PC-9 (cell line): ENCODE measurements at regions of chr5 and their contacts with region 1.

Region 1: GRCh38 chr5:41716382-41716781 is 153.8 kb downstream of the OXCT1 start:
- DNase-seq: no peak
- H3K4me3 ChIP-seq: no peak overlapping the region
- H3K27ac ChIP-seq: no peak overlapping the region
- H3K4me1 ChIP-seq: no peaks in the 10 kb centered on the region
- H3K27me3 ChIP-seq: no peaks in the 10 kb centered on the region
- CTCF ChIP-seq: no peak

Region 2: DNA sequence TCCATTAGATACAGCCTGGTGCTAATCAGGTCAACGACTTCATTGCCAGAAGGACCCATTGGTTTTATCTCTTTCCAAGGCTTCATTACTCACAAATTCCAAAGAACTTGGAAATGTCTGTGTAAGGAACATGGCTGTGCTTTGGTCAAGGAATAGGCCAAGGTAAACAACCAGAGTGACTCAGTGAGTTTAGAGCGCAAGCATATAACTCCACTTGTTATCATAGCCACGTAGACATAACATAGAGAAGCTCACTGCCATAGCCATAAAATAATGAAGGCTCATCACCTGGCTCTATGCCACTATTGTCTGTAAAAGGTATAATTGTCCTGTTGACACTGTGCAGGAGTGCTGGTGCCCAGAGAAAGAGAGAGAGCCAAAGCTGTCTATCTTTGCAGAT is 66.7 kb before region 1 on chr5:
- CTCF ChIA-PET with region 1: no interaction called
- POLR2A ChIA-PET with region 1: no interaction called
- intact Hi-C with region 1: loop called (anchors 10 kb)
- DNase-seq: no peak
- H3K4me3 ChIP-seq: no peak overlapping the region
- H3K27ac ChIP-seq: no peak overlapping the region
- H3K4me1 ChIP-seq: no peaks in the 10 kb centered on the region
- H3K27me3 ChIP-seq: no peaks in the 10 kb centered on the region
- CTCF ChIP-seq: no peak